ENCODE measurements at regions of chr22 and their contacts with region 1.

Region 1: GRCh38 chr22:44567846-44568493 is 69.9 kb upstream of the RTL6 start:
- DNase-seq: peak; percentile 74
- ATAC-seq: no peak
- H3K4me3 Mint-ChIP-seq: no peak overlapping the region
- H3K27ac Mint-ChIP-seq: no peak overlapping the region
- H3K4me1 Mint-ChIP-seq: no peaks in the 10 kb centered on the region
- H3K27me3 Mint-ChIP-seq: peaks cover 2% of the 10 kb centered on the region

Region 2: DNA sequence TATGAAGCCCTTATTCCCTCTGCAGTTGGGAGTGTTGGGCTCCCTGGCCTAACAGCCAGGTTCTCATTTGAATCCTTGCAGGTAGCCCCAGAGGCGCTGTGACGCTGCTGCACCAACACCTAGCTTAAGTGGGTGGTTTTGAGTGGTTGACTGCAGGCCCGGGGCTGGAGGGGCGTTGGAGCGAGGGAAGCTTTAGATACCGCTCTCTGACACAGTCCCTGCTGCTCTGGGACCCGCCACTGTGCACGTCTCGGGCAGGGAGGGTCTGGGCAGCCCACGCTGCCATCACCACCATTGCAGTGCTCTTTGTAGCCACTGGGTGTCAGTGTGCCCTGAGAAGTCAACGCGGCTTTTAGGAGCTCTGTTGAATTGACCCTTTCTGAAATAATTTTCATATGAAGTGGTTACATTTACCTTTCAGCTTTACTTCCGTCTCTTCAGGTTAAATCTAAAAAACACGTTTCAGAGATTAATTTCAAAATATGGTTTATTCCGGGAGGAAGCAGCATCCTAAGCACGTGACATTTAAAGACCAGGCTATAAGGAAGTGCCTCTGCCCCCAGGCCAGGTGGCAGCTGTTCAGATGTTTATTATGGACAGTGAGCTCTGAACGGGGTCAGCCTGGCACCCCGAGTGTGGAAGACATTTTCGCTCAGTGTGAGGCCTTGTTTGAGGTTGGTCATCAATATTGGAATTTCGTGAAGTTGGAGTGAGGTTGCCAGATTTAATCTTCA is 574.8 kb before region 1 on chr22:
- CTCF ChIA-PET with region 1: interaction called, 4 read pairs
- POLR2A ChIA-PET with region 1: no interaction called
- intact Hi-C with region 1: loop called (anchors 1 to 5 kb)
- DNase-seq: peak; percentile 74
- ATAC-seq: peak; percentile 74
- H3K4me3 Mint-ChIP-seq: no peak overlapping the region
- H3K27ac Mint-ChIP-seq: no peak overlapping the region
- H3K4me1 Mint-ChIP-seq: peaks cover 29% of the 10 kb centered on the region
- H3K27me3 Mint-ChIP-seq: no peaks in the 10 kb centered on the region

Region 3: GRCh38 chr22:44080936-44081861 is 486.8 kb before region 1 on chr22:
- CTCF ChIA-PET with region 1: interaction called, 3 read pairs
- POLR2A ChIA-PET with region 1: no interaction called
- intact Hi-C with region 1: loop called (anchors 1 to 10 kb)
- DNase-seq: peak; percentile 85
- ATAC-seq: peak; percentile 68
- H3K4me3 Mint-ChIP-seq: no peak overlapping the region
- H3K27ac Mint-ChIP-seq: no peak overlapping the region
- H3K4me1 Mint-ChIP-seq: no peaks in the 10 kb centered on the region
- H3K27me3 Mint-ChIP-seq: no peaks in the 10 kb centered on the region

Region 4: DNA sequence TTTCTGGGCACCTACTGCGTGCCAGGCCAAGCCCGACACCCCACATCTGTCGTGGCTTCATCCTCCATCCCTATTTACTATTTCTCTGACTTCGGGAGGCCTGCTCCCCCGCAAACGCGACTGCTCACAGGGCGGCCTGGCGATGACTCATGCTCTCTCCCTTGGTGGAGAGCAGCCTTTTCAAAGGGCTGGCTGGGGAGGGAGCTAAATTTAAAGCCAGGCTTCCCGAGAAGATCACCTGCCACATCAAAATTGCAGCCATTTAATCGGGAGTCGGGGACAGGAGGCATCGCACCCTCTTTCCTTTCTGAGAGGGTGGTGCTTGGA is 230.3 kb before region 1 on chr22:
- CTCF ChIA-PET with region 1: no interaction called
- POLR2A ChIA-PET with region 1: no interaction called
- intact Hi-C with region 1: loop called in 1 of 2 experiments (anchors 10 kb)
- DNase-seq: peak; percentile 52
- ATAC-seq: peak; percentile 53
- H3K4me3 Mint-ChIP-seq: no peak overlapping the region
- H3K27ac Mint-ChIP-seq: no peak overlapping the region
- H3K4me1 Mint-ChIP-seq: no peaks in the 10 kb centered on the region
- H3K27me3 Mint-ChIP-seq: peaks cover 4% of the 10 kb centered on the region

Region 5: DNA sequence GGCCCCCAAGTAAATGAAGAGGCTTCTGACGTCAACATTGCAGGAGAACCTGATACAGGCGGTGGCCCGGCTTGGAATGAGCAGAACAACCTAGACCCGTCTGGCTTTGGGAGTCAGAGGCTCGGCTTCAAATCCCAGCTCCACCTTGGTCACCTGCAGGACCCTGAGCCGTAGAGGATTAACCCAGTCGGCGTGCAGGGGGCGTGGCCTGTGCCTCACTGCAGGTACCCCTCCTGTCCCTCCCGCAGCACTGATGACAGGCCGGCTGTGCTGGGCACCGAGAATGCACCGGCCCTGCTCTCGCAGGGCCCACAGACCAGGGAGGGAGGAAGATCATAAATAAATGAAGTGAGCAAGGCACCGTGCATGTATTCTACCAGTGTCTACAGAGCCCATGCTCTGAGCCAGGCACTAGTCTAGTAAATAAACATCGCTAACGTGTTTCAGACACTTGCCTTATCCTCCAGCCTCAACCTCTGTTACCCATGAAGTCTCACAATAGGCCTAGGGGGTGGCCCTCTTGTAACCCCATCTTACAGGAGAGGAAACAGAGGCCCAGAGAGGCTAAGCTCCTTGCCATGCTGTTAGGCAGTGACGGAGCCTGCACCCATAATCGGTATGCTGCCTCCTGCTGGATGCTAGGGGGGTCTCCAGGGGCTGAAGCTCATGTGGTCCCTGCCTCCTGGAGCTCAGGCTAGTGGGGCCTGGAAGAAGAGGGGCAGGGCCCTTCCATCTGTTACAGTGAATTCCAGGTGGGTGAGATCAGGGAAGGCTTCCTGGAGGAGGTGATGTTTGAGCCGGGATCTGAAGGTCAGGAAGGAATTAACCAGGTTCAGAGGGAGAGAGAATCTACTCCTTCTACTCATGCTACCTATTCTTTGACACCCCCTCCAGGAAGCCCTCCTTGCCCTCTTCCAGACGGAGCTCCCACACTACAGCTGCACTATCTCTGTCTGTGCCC is 123.3 kb before region 1 on chr22:
- CTCF ChIA-PET with region 1: interaction called, 3 read pairs
- POLR2A ChIA-PET with region 1: no interaction called
- intact Hi-C with region 1: loop called in 1 of 2 experiments (anchors 5 kb)
- DNase-seq: no peak
- ATAC-seq: no peak
- H3K4me3 Mint-ChIP-seq: no peak overlapping the region
- H3K27ac Mint-ChIP-seq: no peak overlapping the region
- H3K4me1 Mint-ChIP-seq: no peaks in the 10 kb centered on the region
- H3K27me3 Mint-ChIP-seq: no peaks in the 10 kb centered on the region